ENCODE measurements at regions of chr20 and their contacts with region 1.

Region 1: DNA sequence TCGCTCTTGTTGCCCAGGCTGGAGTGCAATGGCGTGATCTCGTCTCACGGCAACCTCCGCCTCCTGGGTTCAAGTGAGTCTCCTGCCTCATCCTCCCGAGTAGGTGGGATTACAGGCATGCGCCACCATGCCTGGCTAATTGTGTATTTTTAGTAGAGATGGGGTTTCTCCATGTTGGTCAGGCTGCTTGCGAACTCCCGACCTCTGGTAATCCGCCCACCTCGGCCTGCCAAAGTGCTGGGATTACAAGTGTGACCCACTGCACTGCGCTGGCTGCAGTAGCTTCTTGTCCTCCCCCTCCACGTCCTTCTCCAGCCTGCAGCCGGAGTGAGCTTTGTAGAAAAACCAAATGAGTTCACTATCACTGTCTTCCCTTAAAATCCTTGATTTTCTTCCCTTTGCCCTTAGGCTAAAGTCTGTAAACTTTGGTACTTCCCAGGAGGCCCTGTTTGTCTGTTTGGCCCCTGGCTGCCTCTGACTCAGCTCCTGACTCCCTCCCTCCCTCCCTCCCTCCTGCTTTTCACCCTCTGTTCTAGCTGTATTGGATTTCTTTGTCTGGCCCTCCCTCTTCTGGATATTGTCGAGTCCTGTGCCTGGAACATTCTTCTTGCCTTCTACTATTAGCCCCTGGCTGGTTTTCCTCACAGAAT is 12.9 kb downstream of the PARD6B start:
- DNase-seq: no peak
- ATAC-seq: no peak
- H3K4me3 ChIP-seq: no peak overlapping the region
- H3K4me3 Mint-ChIP-seq: no peak overlapping the region
- H3K27ac ChIP-seq: no peak overlapping the region
- H3K27ac Mint-ChIP-seq: no peak overlapping the region
- H3K4me1 ChIP-seq: no peaks in the 10 kb centered on the region
- H3K4me1 Mint-ChIP-seq: peaks cover 23% of the 10 kb centered on the region
- H3K27me3 ChIP-seq: no peaks in the 10 kb centered on the region
- H3K27me3 Mint-ChIP-seq: no peaks in the 10 kb centered on the region
- CTCF ChIP-seq: no peak

Region 2: GRCh38 chr20:50663095-50663850 is 81.0 kb before region 1 on chr20:
- CTCF ChIA-PET with region 1: no interaction called
- POLR2A ChIA-PET with region 1: no interaction called
- intact Hi-C with region 1: loop called in 1 of 2 experiments (anchors 5 kb)
- DNase-seq: peak in 1 of 9 experiments; percentile 12
- ATAC-seq: no peak
- H3K4me3 ChIP-seq: no peak overlapping the region
- H3K4me3 Mint-ChIP-seq: no peak overlapping the region
- H3K27ac ChIP-seq: no peak overlapping the region
- H3K27ac Mint-ChIP-seq: no peak overlapping the region
- H3K4me1 ChIP-seq: no peaks in the 10 kb centered on the region
- H3K4me1 Mint-ChIP-seq: no peaks in the 10 kb centered on the region
- H3K27me3 ChIP-seq: no peaks in the 10 kb centered on the region
- H3K27me3 Mint-ChIP-seq: peaks cover 13% of the 10 kb centered on the region
- CTCF ChIP-seq: no peak